ENCODE measurements at regions of chr2 and their contacts with region 1.

Region 1: GRCh38 chr2:39504790-39505335 is 67.8 kb upstream of the MAP4K3 start:
- DNase-seq: no peak
- H3K4me3 ChIP-seq: peak overlapping the region in 1 of 2 donors; percentile 3
- H3K27ac ChIP-seq: peak overlapping the region; percentile 62
- H3K4me1 ChIP-seq: peaks cover 23% of the 10 kb centered on the region
- H3K27me3 ChIP-seq: no peaks in the 10 kb centered on the region
- CTCF ChIP-seq: no peak
- POLR2A ChIP-seq: no peak

Region 2: GRCh38 chr2:39350658-39351057 is 154.2 kb before region 1 on chr2:
- intact Hi-C with region 1: no loop called
- DNase-seq: no peak
- H3K4me3 ChIP-seq: no peak overlapping the region
- H3K27ac ChIP-seq: no peak overlapping the region
- H3K4me1 ChIP-seq: no peaks in the 10 kb centered on the region
- H3K27me3 ChIP-seq: no peaks in the 10 kb centered on the region
- CTCF ChIP-seq: no peak
- POLR2A ChIP-seq: no peak

Region 3: DNA sequence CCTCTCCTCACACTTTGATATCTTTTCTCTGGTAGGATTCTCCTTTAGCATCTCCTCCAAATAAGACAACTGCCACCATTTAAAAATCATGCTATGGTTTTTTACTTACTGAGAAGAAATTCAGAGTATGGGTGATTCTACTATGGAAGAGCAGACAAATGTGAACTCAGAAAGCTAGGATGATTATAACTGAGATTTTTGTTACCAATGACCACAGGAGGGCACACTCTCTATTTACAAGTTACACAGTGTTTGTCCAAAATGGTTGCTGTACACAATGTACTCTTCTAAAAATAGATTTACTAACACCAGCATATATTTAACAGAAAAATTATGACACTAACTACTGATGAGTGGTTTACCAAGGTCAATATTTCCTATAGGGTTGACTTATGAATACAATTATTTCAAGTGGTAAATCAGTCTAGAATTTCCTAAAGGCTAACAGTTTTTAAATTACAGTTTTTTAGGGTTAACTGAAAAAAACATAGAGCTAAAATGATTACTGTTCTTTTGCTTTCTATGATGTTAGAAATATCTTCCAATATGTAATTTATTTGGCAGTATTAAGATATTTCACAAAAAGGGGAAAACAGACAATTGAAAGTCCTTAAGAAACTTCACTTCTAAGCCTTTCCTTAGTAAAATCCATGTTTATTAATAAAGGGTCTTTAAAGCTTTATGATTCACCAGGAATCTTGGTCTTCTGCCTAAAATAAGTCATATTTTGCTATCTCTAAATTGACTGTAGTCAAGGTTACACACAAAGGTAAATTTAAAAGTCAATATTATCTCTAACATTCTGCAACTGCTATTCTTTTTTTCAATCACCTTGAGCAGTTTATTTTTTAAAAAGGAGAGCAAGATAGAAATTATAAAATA is 125.0 kb before region 1 on chr2:
- intact Hi-C with region 1: loop called (anchors 5 kb)
- DNase-seq: no peak
- H3K4me3 ChIP-seq: no peak overlapping the region
- H3K27ac ChIP-seq: peak overlapping the region; percentile 59
- H3K4me1 ChIP-seq: peaks cover 31% of the 10 kb centered on the region
- H3K27me3 ChIP-seq: no peaks in the 10 kb centered on the region
- CTCF ChIP-seq: peak in 2 of 3 experiments; percentile 53 to 66
- POLR2A ChIP-seq: no peak

Region 4: DNA sequence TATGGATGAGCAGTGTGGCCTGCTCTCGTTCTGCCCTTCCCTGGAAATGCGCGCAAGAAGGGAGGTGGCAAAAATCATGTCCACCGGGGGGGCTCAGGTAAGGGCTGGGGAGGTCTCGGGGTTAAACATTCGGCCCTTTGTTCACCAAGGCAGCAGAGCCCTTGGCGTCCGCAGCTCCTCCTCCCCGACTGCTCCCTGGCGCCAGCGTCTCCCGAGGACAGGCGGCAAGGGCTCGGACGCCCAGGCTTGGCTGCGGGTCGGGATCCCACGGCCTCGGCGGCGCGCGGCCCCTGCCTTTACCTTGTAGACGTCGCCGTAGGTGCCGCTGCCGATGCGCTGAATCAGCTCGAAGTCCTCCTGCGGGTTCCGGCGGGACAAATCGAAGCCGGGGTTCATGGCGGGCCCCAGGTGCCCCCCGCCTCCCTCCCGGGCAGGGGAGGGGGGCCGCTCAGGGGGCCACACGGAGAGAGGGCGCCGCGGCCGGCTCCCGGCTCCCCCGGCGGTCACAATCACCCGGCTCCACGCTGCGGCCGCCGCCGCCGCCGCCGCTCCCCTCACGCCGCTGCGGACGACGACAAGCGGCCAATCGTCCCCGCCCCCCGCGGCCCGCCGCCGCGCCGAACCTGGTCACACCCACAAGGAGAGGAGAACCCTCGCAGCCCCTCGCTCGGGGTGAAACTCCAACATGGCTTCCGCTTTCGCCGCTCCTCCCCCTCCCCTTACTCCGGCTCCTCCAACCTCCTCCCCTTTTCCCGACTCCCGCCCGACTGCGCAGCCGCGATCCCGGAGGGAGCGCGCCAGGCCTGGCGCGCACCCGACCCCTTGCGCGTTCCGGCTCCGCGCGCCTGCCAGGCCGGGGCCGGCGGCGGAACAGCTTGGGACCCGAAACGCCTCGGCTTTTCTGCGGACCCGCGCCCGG is 68.0 kb before region 1 on chr2 and contains the start of gene MAP4K3:
- intact Hi-C with region 1: loop called (anchors 10 kb)
- DNase-seq: peak in 1 of 2 donors; percentile 91
- H3K4me3 ChIP-seq: peak within 1 kb of the TSS; percentile 88 to 89
- H3K27ac ChIP-seq: peak within 1 kb of the TSS; percentile 97
- H3K4me1 ChIP-seq: peaks cover 50% of the 10 kb centered on the region
- H3K27me3 ChIP-seq: no peaks in the 10 kb centered on the region
- CTCF ChIP-seq: no peak
- POLR2A ChIP-seq: peak in 1 of 2 donors; percentile 77
- total RNA-seq, gene MAP4K3: 38.5 TPM